ENCODE measurements at regions of chr1 and their contacts with region 1.

Region 1: DNA sequence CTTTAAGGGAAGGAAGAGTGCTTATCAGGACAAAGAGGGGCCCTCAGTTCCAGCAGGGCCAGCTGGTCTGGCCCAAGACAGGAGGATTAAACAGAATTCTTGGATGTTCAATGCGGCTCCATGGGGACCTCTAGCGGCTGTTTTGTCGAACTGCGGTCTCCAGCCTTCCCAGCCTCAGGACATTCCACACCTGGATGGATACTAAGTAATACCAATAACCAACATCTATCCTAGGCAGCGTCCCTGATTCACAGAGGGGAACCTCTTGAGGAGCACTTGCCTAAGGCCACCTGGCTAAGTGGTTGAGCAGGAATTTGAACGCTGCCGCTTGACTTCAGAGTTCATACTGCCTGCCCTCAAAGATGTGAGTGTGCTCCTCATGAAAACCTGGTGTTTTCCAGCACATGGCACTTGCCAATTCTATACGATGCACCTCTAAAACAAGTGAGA is 15.5 kb upstream of the CD247 start:
- DNase-seq: peak; percentile 90
- ATAC-seq: peak; percentile 98
- H3K4me3 ChIP-seq: no peak overlapping the region
- H3K27ac ChIP-seq: no peak overlapping the region
- H3K4me1 ChIP-seq: no peaks in the 10 kb centered on the region
- H3K27me3 ChIP-seq: 0 out of 2 replicates have a peak, but pooled peaks cover 5% of the 10 kb centered on the region
- CTCF ChIP-seq: peak; percentile 97

Region 2: GRCh38 chr1:167268398-167268787 is 265.5 kb before region 1 on chr1:
- CTCF ChIA-PET with region 1: interaction called, 6 read pairs
- POLR2A ChIA-PET with region 1: no interaction called
- intact Hi-C with region 1: loop called (anchors 2 kb)
- DNase-seq: no peak
- ATAC-seq: no peak
- H3K4me3 ChIP-seq: no peak overlapping the region
- H3K27ac ChIP-seq: no peak overlapping the region
- H3K4me1 ChIP-seq: peaks cover 14% of the 10 kb centered on the region
- H3K27me3 ChIP-seq: no peaks in the 10 kb centered on the region
- CTCF ChIP-seq: no peak

Region 3: GRCh38 chr1:167401260-167401873 is 132.5 kb before region 1 on chr1:
- CTCF ChIA-PET with region 1: no interaction called
- POLR2A ChIA-PET with region 1: no interaction called
- intact Hi-C with region 1: loop called (anchors 1 kb)
- DNase-seq: peak; percentile 81
- ATAC-seq: peak; percentile 89
- H3K4me3 ChIP-seq: no peak overlapping the region
- H3K27ac ChIP-seq: no peak overlapping the region
- H3K4me1 ChIP-seq: peaks cover 28% of the 10 kb centered on the region
- H3K27me3 ChIP-seq: no peaks in the 10 kb centered on the region
- CTCF ChIP-seq: peak; percentile 92

Region 4: DNA sequence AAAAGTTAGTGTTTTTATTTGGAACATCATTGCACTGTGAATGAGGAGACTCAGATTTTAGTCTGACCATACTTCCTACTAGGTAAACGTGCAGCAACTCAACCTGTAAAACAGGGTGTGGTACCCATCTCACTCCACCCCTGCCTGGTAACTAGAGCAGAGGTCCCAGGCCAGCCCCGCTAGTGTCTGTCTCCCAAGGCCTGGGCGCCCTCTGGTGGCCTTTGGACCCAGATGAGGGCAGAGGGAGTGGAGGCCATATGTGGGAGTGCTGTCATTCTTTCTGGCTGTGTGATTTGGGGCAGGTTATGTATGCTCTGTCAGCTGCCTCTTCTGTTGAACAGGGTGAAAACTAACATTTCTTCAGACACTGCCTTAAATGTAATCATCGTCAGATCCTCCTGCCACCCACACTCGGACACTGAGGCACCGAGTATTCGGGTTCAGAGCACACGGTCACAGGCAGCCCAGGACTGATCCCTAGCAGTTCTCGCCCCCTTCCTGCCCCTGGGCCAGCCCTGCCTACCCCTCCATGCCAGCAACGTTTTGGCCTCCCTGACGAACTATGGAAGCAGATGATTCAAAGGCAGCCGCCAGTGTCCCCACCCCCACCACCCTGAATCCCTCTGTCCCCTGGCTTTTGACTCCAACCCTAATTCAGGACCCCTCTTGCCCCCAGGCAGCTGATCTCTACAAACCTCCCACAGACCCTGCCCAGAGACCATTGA is 91.6 kb before region 1 on chr1:
- CTCF ChIA-PET with region 1: no interaction called
- POLR2A ChIA-PET with region 1: no interaction called
- intact Hi-C with region 1: loop called (anchors 1 kb)
- DNase-seq: peak; percentile 99
- ATAC-seq: peak; percentile 99
- H3K4me3 ChIP-seq: peak overlapping the region; percentile 25; the same call in 1 of the 2 replicates
- H3K27ac ChIP-seq: peak overlapping the region; percentile 73
- H3K4me1 ChIP-seq: peaks cover 30% of the 10 kb centered on the region
- H3K27me3 ChIP-seq: no peaks in the 10 kb centered on the region
- CTCF ChIP-seq: peak; percentile 99

Region 5: DNA sequence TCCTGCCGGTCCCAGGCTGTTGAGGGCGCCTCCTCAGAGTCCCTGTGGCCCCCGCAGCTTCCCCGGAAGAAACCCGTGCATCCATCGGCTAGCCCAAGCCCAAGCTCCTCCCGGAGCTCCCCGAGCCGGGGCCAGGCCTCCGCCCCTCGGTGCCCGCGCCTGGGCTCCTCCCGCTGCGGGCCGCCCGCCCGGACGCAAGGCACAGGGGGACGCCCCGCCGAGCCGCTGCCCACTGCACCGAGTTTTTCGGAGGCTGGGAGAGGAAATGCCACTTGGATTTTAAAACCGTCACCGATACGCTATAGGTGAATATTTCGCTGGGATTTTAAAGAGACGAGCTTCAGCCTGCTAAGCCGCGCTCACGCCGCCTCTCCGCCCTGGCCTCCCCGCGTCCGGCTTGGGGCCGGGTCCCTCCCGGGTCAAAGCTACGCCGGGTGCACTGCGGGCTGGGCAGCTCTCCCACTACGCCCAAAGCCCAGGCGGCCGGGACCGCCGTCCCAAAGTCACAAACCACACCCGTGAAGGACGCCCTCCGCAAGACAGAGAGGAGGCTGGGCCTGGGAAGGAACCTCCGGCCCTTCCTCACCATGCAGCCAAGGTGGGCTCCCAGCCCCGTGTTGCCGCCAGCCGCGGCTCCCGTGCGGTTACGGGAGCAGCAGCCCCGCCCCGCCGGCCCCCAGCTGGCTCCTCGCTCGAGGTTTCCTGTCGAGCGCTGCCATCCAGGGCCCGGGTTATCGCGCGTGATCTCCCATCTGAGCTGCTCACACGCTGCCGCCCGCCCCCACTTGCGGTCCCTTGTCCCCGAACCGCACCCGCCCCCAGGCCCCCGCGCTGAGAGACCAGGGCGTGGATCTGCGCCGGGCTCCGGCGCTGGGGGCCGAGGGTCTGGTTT is 78.7 kb before region 1 on chr1:
- CTCF ChIA-PET with region 1: interaction called, 8 read pairs
- POLR2A ChIA-PET with region 1: no interaction called
- intact Hi-C with region 1: loop called (anchors 2 kb)
- DNase-seq: peak; percentile 61
- ATAC-seq: peak; percentile 73
- H3K4me3 ChIP-seq: peak overlapping the region; percentile 89
- H3K27ac ChIP-seq: no peak overlapping the region
- H3K4me1 ChIP-seq: peaks cover 6% of the 10 kb centered on the region; the same call in 1 of the 2 replicates
- H3K27me3 ChIP-seq: no peaks in the 10 kb centered on the region; the same call in 1 of the 2 replicates
- CTCF ChIP-seq: no peak

Region 6: GRCh38 chr1:167553136-167554027 is 19.5 kb after region 1 on chr1 and contains the start of gene CREG1:
- CTCF ChIA-PET with region 1: no interaction called
- POLR2A ChIA-PET with region 1: interaction called, 11 read pairs
- intact Hi-C with region 1: no loop called
- DNase-seq: peak; percentile 97
- ATAC-seq: peak; percentile 99
- H3K4me3 ChIP-seq: peak within 1 kb of the TSS; percentile 74
- H3K27ac ChIP-seq: no peak within 1 kb of the TSS
- H3K4me1 ChIP-seq: peaks cover 14% of the 10 kb centered on the region; the same call in 1 of the 2 replicates
- H3K27me3 ChIP-seq: no peaks in the 10 kb centered on the region
- CTCF ChIP-seq: no peak
- total RNA-seq, gene CREG1: 55.7 and 63.9 TPM in 2 replicates

Region 7: DNA sequence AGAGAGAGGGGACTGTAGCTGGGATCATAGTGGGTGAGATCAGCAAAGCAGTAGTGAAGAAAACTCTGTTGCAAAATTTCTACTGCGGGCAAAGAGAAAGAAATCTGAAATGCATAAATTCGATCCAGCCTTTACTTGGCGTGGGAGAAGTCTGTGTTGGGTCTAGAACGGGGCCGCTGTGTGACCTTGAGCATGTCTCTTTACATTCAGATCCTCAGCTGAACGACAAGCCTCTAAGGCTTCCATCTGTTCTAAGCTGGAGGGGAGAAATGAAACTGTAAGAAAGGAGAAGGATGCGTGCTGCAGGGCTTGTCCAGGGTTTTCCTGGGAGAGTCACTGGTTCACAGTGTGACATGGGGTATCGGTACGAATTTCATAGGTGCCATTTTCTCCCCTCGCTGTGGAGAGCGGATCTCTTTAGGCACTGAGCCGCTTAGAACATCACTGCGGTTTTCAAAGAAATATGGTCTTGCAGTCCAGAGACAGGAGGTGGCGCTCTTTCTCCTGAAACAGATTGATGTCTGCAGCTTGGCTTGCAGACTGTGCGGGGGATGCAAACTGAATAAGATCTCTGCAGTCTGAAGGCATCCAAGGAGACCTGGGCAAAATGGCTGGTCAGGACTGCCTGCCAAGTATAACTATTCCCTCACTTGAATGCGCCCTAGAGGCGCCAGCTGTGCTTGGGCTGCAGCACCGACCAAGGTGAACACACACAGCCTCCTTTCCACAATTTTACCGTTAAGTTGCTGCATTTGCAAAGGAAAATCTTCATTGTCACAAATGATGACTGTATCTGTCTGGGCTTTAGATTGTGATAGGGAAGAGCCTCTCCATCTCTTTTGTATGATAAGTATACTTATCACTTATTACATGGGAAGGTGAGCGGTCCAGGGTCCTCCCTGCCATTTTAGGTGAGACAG is 905.8 kb after region 1 on chr1:
- CTCF ChIA-PET with region 1: no interaction called
- POLR2A ChIA-PET with region 1: no interaction called
- intact Hi-C with region 1: no loop called
- DNase-seq: peak; percentile 96
- ATAC-seq: peak; percentile 94
- H3K4me3 ChIP-seq: peak overlapping the region; percentile 57
- H3K27ac ChIP-seq: no peak overlapping the region
- H3K4me1 ChIP-seq: no peaks in the 10 kb centered on the region
- H3K27me3 ChIP-seq: no peaks in the 10 kb centered on the region
- CTCF ChIP-seq: peak; percentile 96